ENCODE measurements at regions of chr9 and their contacts with region 1.

Region 1: DNA sequence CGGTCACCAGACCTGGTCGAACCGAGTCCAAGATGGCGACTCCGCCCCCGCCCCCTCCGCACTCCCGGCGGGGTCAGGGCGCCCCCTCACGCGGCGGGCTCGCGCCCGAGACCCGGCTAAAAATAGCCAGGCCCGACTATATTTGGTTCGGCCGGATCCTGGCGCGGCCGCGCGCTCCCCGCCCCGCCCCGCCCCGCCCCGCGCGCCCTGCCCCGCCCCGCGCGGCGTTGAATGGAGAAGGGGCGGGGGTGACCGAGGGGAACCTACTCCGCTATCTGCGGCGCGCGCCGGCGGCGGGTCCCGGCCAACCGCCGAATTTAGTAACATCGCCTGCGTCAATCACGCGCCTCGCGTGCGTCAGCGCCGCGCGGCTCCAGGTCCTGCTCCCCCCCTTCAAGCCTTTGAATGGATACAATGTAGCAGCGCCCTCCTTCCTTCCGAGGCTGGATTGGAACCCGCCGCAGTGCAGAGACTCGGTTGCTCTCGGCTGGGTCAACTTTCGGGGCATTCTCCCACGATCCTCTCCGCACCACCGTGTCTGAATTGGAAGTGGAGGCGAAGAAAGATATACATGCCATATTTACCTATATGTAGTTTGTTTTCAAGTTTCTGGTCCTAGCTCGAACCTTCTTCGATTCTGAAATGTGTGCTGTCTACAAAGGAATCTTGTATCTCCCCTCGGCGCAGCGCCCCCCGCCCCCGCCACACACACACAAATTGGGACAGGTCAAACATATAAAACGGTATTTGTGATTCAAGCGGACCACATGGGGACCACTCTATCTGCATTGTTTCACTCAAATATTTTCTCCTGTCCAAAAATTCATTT is 1.6 kb upstream of the NR4A3 start:
- DNase-seq: peak; percentile 91
- H3K4me3 Mint-ChIP-seq: peak overlapping the region; percentile 94
- H3K27ac Mint-ChIP-seq: peak overlapping the region; percentile 91
- H3K4me1 Mint-ChIP-seq: peaks cover 45% of the 10 kb centered on the region
- H3K27me3 Mint-ChIP-seq: peaks cover 17% of the 10 kb centered on the region

Region 2: GRCh38 chr9:98998441-98999151 is 821.5 kb before region 1 on chr9:
- CTCF ChIA-PET with region 1: no interaction called
- intact Hi-C with region 1: loop called (anchors 10 kb)
- DNase-seq: peak; percentile 69
- H3K4me3 Mint-ChIP-seq: no peak overlapping the region
- H3K27ac Mint-ChIP-seq: no peak overlapping the region
- H3K4me1 Mint-ChIP-seq: peaks cover 21% of the 10 kb centered on the region
- H3K27me3 Mint-ChIP-seq: peaks cover 4% of the 10 kb centered on the region

Region 3: GRCh38 chr9:99221621-99222415 is 598.3 kb before region 1 on chr9 and contains the starts of genes ALG2 and SEC61B:
- CTCF ChIA-PET with region 1: no interaction called
- intact Hi-C with region 1: loop called (anchors 1 kb)
- DNase-seq: peak; percentile 94
- H3K4me3 Mint-ChIP-seq: peak within 1 kb of the TSS; percentile 97
- H3K27ac Mint-ChIP-seq: peak within 1 kb of the TSS; percentile 98
- H3K4me1 Mint-ChIP-seq: peaks cover 56% of the 10 kb centered on the region
- H3K27me3 Mint-ChIP-seq: no peaks in the 10 kb centered on the region
- total RNA-seq, gene ALG2: 11.3 to 11.8 TPM
- total RNA-seq, gene SEC61B: 105 TPM

Region 4: DNA sequence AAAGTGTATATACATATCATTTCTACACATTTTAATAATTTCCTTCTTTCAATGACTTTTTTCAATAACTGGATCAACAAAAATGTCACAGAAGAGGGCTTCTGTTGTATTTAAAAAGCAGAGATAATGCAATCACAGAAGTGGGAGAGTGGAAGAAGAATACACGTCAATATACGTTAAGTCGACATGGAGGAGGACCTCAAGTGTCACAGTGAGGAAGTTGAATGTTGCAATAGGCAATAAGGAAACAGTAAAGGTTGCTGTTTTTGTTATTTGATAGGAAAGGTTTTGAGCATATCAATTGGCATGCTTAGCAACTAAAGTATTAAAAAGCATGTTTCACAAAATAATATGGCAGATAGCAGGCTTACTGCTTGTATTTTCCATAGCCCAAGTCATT is 182.4 kb before region 1 on chr9:
- CTCF ChIA-PET with region 1: no interaction called
- intact Hi-C with region 1: no loop called
- DNase-seq: no peak
- H3K4me3 Mint-ChIP-seq: no peak overlapping the region
- H3K27ac Mint-ChIP-seq: no peak overlapping the region
- H3K4me1 Mint-ChIP-seq: no peaks in the 10 kb centered on the region
- H3K27me3 Mint-ChIP-seq: peaks cover 2% of the 10 kb centered on the region

Region 5: DNA sequence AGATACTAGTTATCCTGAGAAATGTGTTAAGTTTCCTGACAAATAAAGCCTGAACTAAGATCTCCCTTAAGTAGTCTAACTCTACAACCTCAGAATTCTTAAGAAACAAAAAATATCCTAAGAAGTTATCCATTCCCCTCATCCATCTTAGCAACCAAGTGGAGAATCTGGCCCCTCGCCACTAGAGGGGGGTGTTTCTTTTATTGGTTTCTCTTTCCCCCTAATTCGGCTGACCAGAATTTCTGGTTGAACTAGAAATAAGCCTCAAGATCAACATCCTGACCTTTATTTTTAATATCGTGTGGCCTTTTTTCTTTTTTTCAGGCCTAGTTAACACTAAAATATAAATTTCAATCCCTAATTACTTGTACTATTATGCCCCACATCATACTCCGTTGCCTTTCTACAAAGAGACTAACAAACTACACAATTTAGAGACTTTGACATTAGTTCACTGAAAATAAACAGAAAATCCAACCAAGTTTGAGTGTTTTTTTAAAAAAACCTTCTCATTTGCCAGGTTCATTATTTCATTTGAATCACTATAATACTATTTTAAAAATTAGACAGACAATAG is 12.7 kb before region 1 on chr9:
- CTCF ChIA-PET with region 1: interaction called, 13 read pairs
- intact Hi-C with region 1: loop called (anchors 1 kb)
- DNase-seq: peak; percentile 79
- H3K4me3 Mint-ChIP-seq: no peak overlapping the region
- H3K27ac Mint-ChIP-seq: no peak overlapping the region
- H3K4me1 Mint-ChIP-seq: peaks cover 21% of the 10 kb centered on the region
- H3K27me3 Mint-ChIP-seq: no peaks in the 10 kb centered on the region

Region 6: GRCh38 chr9:100020121-100020795 is 200.2 kb after region 1 on chr9:
- CTCF ChIA-PET with region 1: no interaction called
- intact Hi-C with region 1: no loop called
- DNase-seq: no peak
- H3K4me3 Mint-ChIP-seq: no peak overlapping the region
- H3K27ac Mint-ChIP-seq: no peak overlapping the region
- H3K4me1 Mint-ChIP-seq: no peaks in the 10 kb centered on the region
- H3K27me3 Mint-ChIP-seq: no peaks in the 10 kb centered on the region

Region 7: GRCh38 chr9:100098887-100099721 is 279.0 kb after region 1 on chr9 and contains the starts of genes ERP44 and INVS:
- CTCF ChIA-PET with region 1: interaction called, 3 read pairs
- intact Hi-C with region 1: loop called (anchors 1 kb)
- DNase-seq: peak; percentile 99
- H3K4me3 Mint-ChIP-seq: peak within 1 kb of the TSS; percentile 97
- H3K27ac Mint-ChIP-seq: peak within 1 kb of the TSS; percentile 79
- H3K4me1 Mint-ChIP-seq: peaks cover 29% of the 10 kb centered on the region
- H3K27me3 Mint-ChIP-seq: no peaks in the 10 kb centered on the region
- total RNA-seq, gene ERP44: 9.1 to 9.5 TPM
- total RNA-seq, gene INVS: 5.7 to 7.3 TPM

Region 8: GRCh38 chr9:100352727-100353505 is 532.8 kb after region 1 on chr9 and contains the start of gene TEX10:
- CTCF ChIA-PET with region 1: no interaction called
- intact Hi-C with region 1: loop called (anchors 2 kb)
- DNase-seq: peak; percentile 91
- H3K4me3 Mint-ChIP-seq: peak within 1 kb of the TSS; percentile 85
- H3K27ac Mint-ChIP-seq: peak within 1 kb of the TSS; percentile 74
- H3K4me1 Mint-ChIP-seq: peaks cover 33% of the 10 kb centered on the region
- H3K27me3 Mint-ChIP-seq: no peaks in the 10 kb centered on the region
- total RNA-seq, gene TEX10: 17.3 to 17.9 TPM

Region 9: GRCh38 chr9:101398068-101398929 is 1578.2 kb after region 1 on chr9 and contains the starts of genes MRPL50 and ZNF189:
- CTCF ChIA-PET with region 1: no interaction called
- intact Hi-C with region 1: loop called (anchors 1 kb)
- DNase-seq: peak; percentile 99
- H3K4me3 Mint-ChIP-seq: peak within 1 kb of the TSS; percentile 92
- H3K27ac Mint-ChIP-seq: peak within 1 kb of the TSS; percentile 97
- H3K4me1 Mint-ChIP-seq: peaks cover 66% of the 10 kb centered on the region
- H3K27me3 Mint-ChIP-seq: no peaks in the 10 kb centered on the region
- total RNA-seq, gene MRPL50: 13.2 to 14.3 TPM
- total RNA-seq, gene ZNF189: 5.5 to 5.7 TPM